ENCODE measurements at regions of chr18 and their contacts with region 1.

Region 1: GRCh38 chr18:77000527-77000926 is 132.1 kb downstream of the MBP start:
- DNase-seq: no peak
- ATAC-seq: peak; percentile 61
- H3K4me3 Mint-ChIP-seq: no peak overlapping the region
- H3K27ac Mint-ChIP-seq: no peak overlapping the region
- H3K4me1 Mint-ChIP-seq: peaks cover 18% of the 10 kb centered on the region
- H3K27me3 Mint-ChIP-seq: no peaks in the 10 kb centered on the region
- CTCF ChIP-seq: peak; percentile 82

Region 2: DNA sequence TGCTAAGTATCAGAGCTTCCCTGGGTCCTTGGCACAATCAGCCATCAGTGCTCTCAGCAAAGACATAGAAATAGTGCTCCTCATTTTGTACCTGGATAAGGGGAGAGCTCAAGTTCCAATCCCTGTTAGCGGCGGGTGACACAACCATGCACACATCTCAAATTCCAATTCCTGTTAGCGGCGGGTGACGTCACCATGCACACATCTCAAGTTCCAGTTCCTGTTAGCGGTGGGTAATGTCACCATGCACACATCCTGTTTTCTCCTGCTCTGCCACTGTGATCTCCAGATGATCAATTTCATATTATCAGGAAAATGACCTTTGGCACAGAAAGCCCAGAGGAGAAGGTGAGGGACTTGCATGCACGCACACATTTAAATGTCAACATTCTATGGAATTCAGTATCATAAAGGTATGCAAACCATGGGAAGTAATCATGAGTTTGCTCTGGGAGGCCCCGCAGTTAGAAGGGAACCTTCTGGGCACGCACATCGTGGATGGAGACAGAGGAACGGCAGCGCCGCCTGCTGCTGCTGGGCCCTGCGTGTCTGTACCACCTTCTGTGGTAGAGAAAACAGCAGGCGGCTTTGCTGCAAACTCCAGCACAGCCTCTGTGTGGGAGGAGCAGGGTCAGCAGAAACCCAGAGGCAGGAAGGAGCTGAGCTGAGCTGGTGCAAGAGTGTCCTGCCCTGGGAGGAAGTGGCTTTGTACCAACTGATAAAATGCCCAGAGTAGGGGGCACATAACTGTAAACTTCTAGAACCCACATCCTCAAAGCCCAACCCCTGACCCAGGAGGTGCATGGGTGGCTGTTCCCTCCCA is 54.3 kb after region 1 on chr18:
- CTCF ChIA-PET with region 1: interaction called, 31 read pairs
- POLR2A ChIA-PET with region 1: interaction called, 8 read pairs
- intact Hi-C with region 1: loop called (anchors 1 kb)
- DNase-seq: peak; percentile 57
- ATAC-seq: peak; percentile 65
- H3K4me3 Mint-ChIP-seq: peak overlapping the region; percentile 67
- H3K27ac Mint-ChIP-seq: peak overlapping the region; percentile 91
- H3K4me1 Mint-ChIP-seq: peaks cover 65% of the 10 kb centered on the region
- H3K27me3 Mint-ChIP-seq: no peaks in the 10 kb centered on the region
- CTCF ChIP-seq: no peak

Region 3: GRCh38 chr18:77108001-77108692 is 107.6 kb after region 1 on chr18:
- CTCF ChIA-PET with region 1: interaction called, 14 read pairs
- POLR2A ChIA-PET with region 1: no interaction called
- intact Hi-C with region 1: loop called (anchors 5 kb)
- DNase-seq: no peak
- ATAC-seq: peak; percentile 59
- H3K4me3 Mint-ChIP-seq: peak overlapping the region; percentile 29
- H3K27ac Mint-ChIP-seq: peak overlapping the region; percentile 77
- H3K4me1 Mint-ChIP-seq: peaks cover 70% of the 10 kb centered on the region
- H3K27me3 Mint-ChIP-seq: no peaks in the 10 kb centered on the region
- CTCF ChIP-seq: no peak

Region 4: GRCh38 chr18:77178559-77178958 is 178.0 kb after region 1 on chr18:
- CTCF ChIA-PET with region 1: no interaction called
- POLR2A ChIA-PET with region 1: no interaction called
- intact Hi-C with region 1: no loop called
- DNase-seq: no peak
- ATAC-seq: no peak
- H3K4me3 Mint-ChIP-seq: no peak overlapping the region
- H3K27ac Mint-ChIP-seq: no peak overlapping the region
- H3K4me1 Mint-ChIP-seq: no peaks in the 10 kb centered on the region
- H3K27me3 Mint-ChIP-seq: peaks cover under 1% of the 10 kb centered on the region
- CTCF ChIP-seq: no peak

Region 5: GRCh38 chr18:77207540-77207939 is 207.0 kb after region 1 on chr18:
- CTCF ChIA-PET with region 1: interaction called, 96 read pairs
- POLR2A ChIA-PET with region 1: interaction called, 6 read pairs
- intact Hi-C with region 1: loop called (anchors 1 kb)
- DNase-seq: no peak
- ATAC-seq: peak; percentile 87
- H3K4me3 Mint-ChIP-seq: peak overlapping the region; percentile 64
- H3K27ac Mint-ChIP-seq: peak overlapping the region; percentile 74
- H3K4me1 Mint-ChIP-seq: peaks cover 25% of the 10 kb centered on the region
- H3K27me3 Mint-ChIP-seq: peaks cover 2% of the 10 kb centered on the region
- CTCF ChIP-seq: no peak

Region 6: GRCh38 chr18:77650799-77651385 is 650.4 kb after region 1 on chr18:
- CTCF ChIA-PET with region 1: no interaction called
- POLR2A ChIA-PET with region 1: no interaction called
- intact Hi-C with region 1: loop called (anchors 2 kb)
- DNase-seq: peak; percentile 35
- ATAC-seq: peak; percentile 47
- H3K4me3 Mint-ChIP-seq: no peak overlapping the region
- H3K27ac Mint-ChIP-seq: no peak overlapping the region
- H3K4me1 Mint-ChIP-seq: no peaks in the 10 kb centered on the region
- H3K27me3 Mint-ChIP-seq: peaks cover 23% of the 10 kb centered on the region
- CTCF ChIP-seq: no peak

Measured in activated B cell treated with CpG ODN at 0.5 μM for 24 hours (primary cell).